Activated CD4-positive, alpha-beta T cell treated with anti-CD3 and anti-CD28 coated beads for 36 hours (primary cell): ENCODE measurements at regions of chr1 and their contacts with region 1.

Region 1: GRCh38 chr1:211514030-211514754 is 22.2 kb upstream of the RD3 start:
- DNase-seq: peak; percentile 91
- ATAC-seq: peak; percentile 85
- H3K4me3 Mint-ChIP-seq: peak overlapping the region; percentile 28
- H3K27ac Mint-ChIP-seq: no peak overlapping the region
- H3K4me1 Mint-ChIP-seq: peaks cover 22% of the 10 kb centered on the region
- H3K27me3 Mint-ChIP-seq: peaks cover 2% of the 10 kb centered on the region

Region 2: GRCh38 chr1:210584439-210585113 is 929.6 kb before region 1 on chr1:
- CTCF ChIA-PET with region 1: interaction called, 3 read pairs
- POLR2A ChIA-PET with region 1: no interaction called
- intact Hi-C with region 1: loop called (anchors 1 to 10 kb)
- DNase-seq: peak; percentile 91
- ATAC-seq: peak; percentile 96
- H3K4me3 Mint-ChIP-seq: no peak overlapping the region
- H3K27ac Mint-ChIP-seq: no peak overlapping the region
- H3K4me1 Mint-ChIP-seq: peaks cover 7% of the 10 kb centered on the region
- H3K27me3 Mint-ChIP-seq: no peaks in the 10 kb centered on the region

Region 3: DNA sequence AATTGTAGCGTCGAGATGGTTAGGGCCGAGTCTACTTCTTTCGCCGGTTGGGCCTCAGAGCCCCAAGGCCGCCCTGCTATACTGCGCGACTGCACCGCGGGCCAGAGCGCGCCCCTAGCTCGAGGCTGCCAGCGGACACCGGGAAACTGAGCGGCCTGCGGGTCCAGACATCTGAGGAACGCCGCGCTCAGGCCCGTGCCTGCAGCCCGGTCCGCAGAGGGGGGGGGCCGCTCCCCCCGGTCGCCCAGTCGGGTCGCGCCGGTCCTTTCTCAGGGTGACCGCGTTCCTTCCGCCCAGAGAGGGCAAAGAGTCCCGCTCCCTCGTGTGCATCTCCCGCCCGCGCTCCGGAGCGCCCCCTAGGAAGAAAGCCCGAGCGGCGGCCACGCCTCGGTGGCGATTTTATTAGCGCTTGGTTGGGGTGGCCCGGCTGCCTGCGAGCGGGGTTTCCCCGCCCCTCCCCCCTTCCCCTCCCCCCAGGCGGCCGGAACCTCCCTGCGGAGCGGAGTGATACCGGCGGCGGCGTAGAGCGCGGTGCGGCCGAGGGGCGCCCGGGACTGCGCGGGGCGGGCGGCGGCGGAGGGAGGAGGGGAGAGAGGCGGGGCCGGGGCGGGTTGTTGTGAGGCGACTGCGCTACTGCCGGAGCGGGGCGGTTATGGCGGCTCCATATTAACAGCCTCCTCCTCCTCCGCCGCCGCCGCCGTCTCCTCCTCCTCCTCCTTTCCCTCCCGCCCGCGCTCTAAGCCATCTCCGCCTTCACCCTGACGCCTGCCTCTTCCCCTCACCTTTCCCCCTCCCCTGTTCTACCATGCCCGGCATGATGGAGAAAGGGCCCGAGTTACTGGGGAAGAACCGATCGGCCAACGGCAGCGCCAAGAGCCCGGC is 255.2 kb before region 1 on chr1 and contains the start of gene RCOR3:
- CTCF ChIA-PET with region 1: interaction called, 3 read pairs
- POLR2A ChIA-PET with region 1: no interaction called
- intact Hi-C with region 1: loop called in 1 of 2 experiments (anchors 1 kb)
- DNase-seq: peak; percentile 97
- ATAC-seq: peak; percentile 83
- H3K4me3 Mint-ChIP-seq: peak within 1 kb of the TSS; percentile 90
- H3K27ac Mint-ChIP-seq: peak within 1 kb of the TSS; percentile 96
- H3K4me1 Mint-ChIP-seq: peaks cover 13% of the 10 kb centered on the region
- H3K27me3 Mint-ChIP-seq: no peaks in the 10 kb centered on the region
- total RNA-seq, gene RCOR3: 31.0 to 33.4 TPM

Region 4: GRCh38 chr1:211420389-211420788 is 93.8 kb before region 1 on chr1:
- CTCF ChIA-PET with region 1: no interaction called
- POLR2A ChIA-PET with region 1: no interaction called
- intact Hi-C with region 1: loop called (anchors 1 to 5 kb)
- DNase-seq: peak; percentile 44
- ATAC-seq: peak; percentile 36
- H3K4me3 Mint-ChIP-seq: no peak overlapping the region
- H3K27ac Mint-ChIP-seq: no peak overlapping the region
- H3K4me1 Mint-ChIP-seq: peaks cover 23% of the 10 kb centered on the region
- H3K27me3 Mint-ChIP-seq: no peaks in the 10 kb centered on the region

Region 5: GRCh38 chr1:211476200-211476849 is 37.9 kb before region 1 on chr1:
- CTCF ChIA-PET with region 1: interaction called, 28 read pairs
- POLR2A ChIA-PET with region 1: no interaction called
- intact Hi-C with region 1: loop called (anchors 2 kb)
- DNase-seq: peak; percentile 89
- ATAC-seq: peak; percentile 81
- H3K4me3 Mint-ChIP-seq: no peak overlapping the region
- H3K27ac Mint-ChIP-seq: no peak overlapping the region
- H3K4me1 Mint-ChIP-seq: no peaks in the 10 kb centered on the region
- H3K27me3 Mint-ChIP-seq: peaks cover 14% of the 10 kb centered on the region

Region 6: DNA sequence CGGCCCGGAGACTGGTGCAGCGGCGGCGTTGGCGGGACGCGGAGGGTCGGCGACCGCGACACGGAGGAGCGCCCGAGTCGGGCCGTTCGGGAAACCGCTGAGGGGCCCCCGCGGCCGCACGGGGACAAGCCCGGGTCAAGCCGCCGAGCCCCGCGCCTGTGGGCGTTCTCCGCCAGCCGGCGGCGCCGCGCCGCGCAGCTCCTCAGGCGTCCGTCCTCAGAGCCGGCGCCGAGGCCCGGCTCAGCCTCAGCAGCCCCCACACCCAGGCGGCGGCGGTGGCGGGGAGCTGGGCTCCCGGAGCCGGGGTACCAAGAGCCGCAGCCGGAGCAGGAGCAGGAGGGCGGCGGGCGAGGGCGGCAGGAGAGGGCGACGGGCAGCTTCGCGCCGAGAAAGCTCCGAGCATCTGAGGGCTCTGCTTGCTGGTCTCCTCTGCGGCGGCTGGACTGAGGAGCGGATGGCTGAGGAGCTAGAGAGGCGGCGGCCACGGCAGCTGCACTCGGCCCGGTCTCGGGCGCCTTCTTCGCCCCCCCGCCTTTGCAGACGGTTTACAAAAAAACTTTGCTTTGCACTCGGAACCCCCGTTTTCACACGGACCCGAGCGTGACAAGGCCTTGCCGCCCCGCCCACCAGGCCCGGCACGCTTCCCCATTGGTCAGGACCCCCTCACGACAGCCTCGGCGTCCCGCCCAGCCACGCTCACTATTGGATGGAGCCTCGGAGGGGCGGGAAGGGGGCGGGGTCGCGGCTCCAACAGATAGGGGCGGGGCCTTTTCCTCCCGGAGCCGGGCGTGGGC is 64.6 kb after region 1 on chr1 and contains the start of gene SLC30A1:
- CTCF ChIA-PET with region 1: interaction called, 6 read pairs
- POLR2A ChIA-PET with region 1: interaction called, 4 read pairs
- intact Hi-C with region 1: loop called (anchors 1 kb)
- DNase-seq: peak; percentile 100
- ATAC-seq: peak; percentile 94
- H3K4me3 Mint-ChIP-seq: peak within 1 kb of the TSS; percentile 89
- H3K27ac Mint-ChIP-seq: peak within 1 kb of the TSS; percentile 85
- H3K4me1 Mint-ChIP-seq: peaks cover 31% of the 10 kb centered on the region
- H3K27me3 Mint-ChIP-seq: no peaks in the 10 kb centered on the region
- total RNA-seq, gene SLC30A1: 2.9 to 4.5 TPM